Right cardiac atrium (tissue), 5 donors: ENCODE measurements at regions of chr7 and their contacts with region 1.

Region 1: DNA sequence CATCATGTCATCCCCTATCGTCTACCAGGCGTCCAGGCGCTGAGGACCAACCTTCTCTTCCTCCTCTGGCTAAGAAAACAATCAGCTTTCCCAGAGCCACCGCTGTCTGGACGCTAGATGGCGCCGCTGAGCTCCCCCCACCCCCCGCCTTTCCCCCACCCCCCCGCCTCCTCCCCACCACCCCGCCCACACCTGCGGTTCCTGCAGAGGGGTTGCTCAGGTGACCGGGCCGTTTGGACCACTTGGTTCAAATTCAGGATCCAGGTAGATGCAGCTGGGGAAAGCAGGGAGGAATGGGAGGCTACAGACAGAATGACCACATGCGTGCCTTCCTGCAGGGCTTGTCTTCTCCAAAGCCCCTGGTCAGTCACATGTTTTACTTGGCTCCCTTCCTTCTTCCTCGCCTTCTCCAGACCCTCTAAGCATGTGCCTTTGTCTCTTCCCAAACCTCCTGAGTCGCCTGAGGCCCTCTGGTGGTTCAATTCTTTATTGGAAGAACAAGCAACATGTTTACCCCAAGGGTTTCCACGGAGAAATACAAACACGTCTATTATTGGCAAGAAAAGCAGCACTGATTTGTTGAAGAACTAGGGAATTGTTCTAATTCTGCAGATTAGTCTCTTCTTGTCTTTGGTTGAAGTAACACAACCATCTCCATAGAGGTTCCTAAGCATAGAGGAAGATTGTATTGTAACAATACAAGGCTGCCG is 24.7 kb downstream of the AOC1 start:
- DNase-seq: peak; percentile 59 to 76 (median 76)
- ATAC-seq: peak; percentile 89 to 94
- H3K4me3 ChIP-seq: no peak overlapping the region
- H3K27ac ChIP-seq: no peak overlapping the region
- H3K4me1 ChIP-seq: no peaks in the 10 kb centered on the region
- H3K27me3 ChIP-seq: no peaks in the 10 kb centered on the region

Region 2: GRCh38 chr7:150778738-150779301 is 98.2 kb before region 1 on chr7:
- intact Hi-C with region 1: loop called (anchors 2 to 5 kb)
- DNase-seq: peak; percentile 88 to 95 (median 91)
- ATAC-seq: peak; percentile 92 to 93
- H3K4me3 ChIP-seq: no peak overlapping the region
- H3K27ac ChIP-seq: no peak overlapping the region
- H3K4me1 ChIP-seq: no peaks in the 10 kb centered on the region
- H3K27me3 ChIP-seq: no peaks in the 10 kb centered on the region

Region 3: GRCh38 chr7:152136686-152137085 is 1259.7 kb after region 1 on chr7:
- intact Hi-C with region 1: no loop called
- DNase-seq: peak in 1 of 3 donors; percentile 57
- ATAC-seq: peak; percentile 59 to 74
- H3K4me3 ChIP-seq: no peak overlapping the region
- H3K27ac ChIP-seq: peak overlapping the region; percentile 75
- H3K4me1 ChIP-seq: peaks cover 5% of the 10 kb centered on the region
- H3K27me3 ChIP-seq: no peaks in the 10 kb centered on the region